Transverse colon (tissue), 4 donors: ENCODE measurements at regions of chr17 and their contacts with region 1.

Region 1: DNA sequence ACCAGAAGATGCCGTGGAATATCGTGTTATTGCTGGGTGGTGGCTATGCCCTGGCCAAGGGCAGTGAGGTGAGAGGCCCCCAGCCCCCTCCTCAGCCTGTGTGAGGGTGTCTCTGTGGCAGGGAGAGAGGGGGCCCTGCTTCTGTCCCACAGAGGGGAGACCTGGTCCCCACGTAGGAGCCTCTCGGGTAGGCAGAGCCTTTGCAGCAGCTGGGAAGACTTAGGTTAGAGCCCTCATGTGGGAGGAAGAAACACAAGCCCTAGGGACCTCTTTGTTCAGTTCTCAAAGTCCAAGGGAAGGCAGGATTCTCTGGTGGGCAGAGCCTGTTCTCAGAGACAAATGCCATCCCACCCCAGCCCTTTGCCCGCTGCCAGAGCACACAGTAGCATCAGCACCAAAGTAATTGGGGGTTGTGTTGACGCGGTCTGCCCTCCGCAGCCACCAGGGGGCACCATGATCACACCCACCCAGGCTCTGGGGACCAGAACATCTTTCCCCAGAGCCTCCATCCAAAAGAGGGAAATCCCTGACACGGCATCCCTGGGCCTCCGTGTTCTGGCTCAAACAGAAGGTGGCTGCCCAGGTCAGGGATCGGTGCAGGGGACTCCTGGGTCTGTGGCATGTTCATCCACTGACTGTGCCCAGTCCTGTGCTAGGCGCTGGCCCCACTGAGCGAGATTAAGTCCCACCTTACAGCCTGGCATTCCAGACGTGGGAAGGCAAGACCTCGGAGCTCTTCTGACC is 11.5 kb upstream of the FOXN1 start:
- DNase-seq: peak; percentile 79
- H3K4me3 ChIP-seq: no peak overlapping the region
- H3K27ac ChIP-seq: no peak overlapping the region
- H3K4me1 ChIP-seq: peaks cover 0 to 10% (median 8%) of the 10 kb centered on the region in 4 donors
- H3K27me3 ChIP-seq: no peaks in the 10 kb centered on the region
- CTCF ChIP-seq: peak; percentile 83 to 90 (median 89)
- EP300 ChIP-seq: no peak
- POLR2A ChIP-seq: no peak

Region 2: GRCh38 chr17:28133562-28133970 is 361.1 kb before region 1 on chr17:
- in situ Hi-C with region 1: no loop called
- intact Hi-C with region 1: no loop called
- DNase-seq: no peak
- H3K4me3 ChIP-seq: no peak overlapping the region
- H3K27ac ChIP-seq: no peak overlapping the region
- H3K4me1 ChIP-seq: peaks cover 0 to 11% (median 6%) of the 10 kb centered on the region in 4 donors
- H3K27me3 ChIP-seq: no peaks in the 10 kb centered on the region
- CTCF ChIP-seq: no peak
- EP300 ChIP-seq: no peak
- POLR2A ChIP-seq: no peak

Region 3: GRCh38 chr17:28532991-28533807 is 38.6 kb after region 1 on chr17:
- in situ Hi-C with region 1: loop called in 1 of 4 experiments (anchors 5 kb)
- intact Hi-C with region 1: no loop called
- DNase-seq: peak; percentile 52
- H3K4me3 ChIP-seq: no peak overlapping the region
- H3K27ac ChIP-seq: no peak overlapping the region
- H3K4me1 ChIP-seq: peaks cover 3 to 28% (median 9%) of the 10 kb centered on the region in 4 donors
- H3K27me3 ChIP-seq: no peaks in the 10 kb centered on the region
- CTCF ChIP-seq: no peak
- EP300 ChIP-seq: no peak
- POLR2A ChIP-seq: no peak

Region 4: DNA sequence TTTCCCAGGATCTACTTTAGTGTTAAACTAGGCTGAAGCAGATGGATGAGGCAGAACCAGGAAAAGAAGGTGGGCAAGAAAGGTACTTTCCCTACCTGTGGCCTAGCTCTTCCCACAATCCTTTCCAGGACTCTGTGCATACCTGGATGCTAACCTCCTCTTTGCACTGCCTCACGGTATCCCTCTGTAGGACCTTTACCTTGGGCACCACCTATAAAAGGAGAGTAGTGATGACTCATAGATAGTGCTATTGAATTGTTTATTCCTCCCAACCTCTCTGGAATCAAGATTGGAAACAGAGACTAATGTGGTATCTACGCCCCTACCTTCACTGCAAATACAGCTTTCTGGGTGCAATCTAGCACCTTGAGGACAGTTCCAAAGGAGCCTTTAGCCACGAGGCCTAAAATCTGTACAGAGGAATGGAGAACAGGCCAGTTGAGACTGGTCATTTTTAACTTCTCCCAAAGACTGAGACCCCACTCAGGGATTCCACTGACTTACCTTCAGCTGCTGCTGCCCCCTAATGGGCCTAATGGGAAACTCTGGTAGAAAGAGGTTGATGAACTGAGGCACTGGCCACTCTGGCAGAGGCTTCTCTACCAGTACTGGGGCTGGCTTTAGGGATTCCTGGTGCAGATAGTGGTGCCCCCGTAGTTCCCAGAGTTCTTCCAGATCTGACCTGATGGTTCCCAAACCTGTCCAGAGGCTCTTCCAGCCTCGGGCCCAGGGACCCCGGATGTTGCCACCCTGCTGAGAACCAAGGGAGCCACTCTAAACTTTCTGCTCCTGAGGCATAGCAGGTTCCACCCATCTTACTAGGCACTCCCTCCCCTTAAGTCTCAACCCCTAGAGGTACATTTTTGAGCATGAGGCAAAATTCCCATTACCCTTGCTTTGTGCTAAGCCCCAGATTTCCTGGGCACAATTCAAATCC is 118.6 kb after region 1 on chr17:
- in situ Hi-C with region 1: loop called in 2 of 4 experiments (anchors 10 kb)
- intact Hi-C with region 1: loop called (anchors 5 kb)
- DNase-seq: peak; percentile 21
- H3K4me3 ChIP-seq: no peak overlapping the region
- H3K27ac ChIP-seq: no peak overlapping the region
- H3K4me1 ChIP-seq: peaks cover 0 to 3% (median 0%) of the 10 kb centered on the region in 4 donors
- H3K27me3 ChIP-seq: no peaks in the 10 kb centered on the region
- CTCF ChIP-seq: peak; percentile 52 to 61 (median 56)
- EP300 ChIP-seq: no peak
- POLR2A ChIP-seq: no peak